ENCODE measurements at regions of chr22 and their contacts with region 1.

Region 1: DNA sequence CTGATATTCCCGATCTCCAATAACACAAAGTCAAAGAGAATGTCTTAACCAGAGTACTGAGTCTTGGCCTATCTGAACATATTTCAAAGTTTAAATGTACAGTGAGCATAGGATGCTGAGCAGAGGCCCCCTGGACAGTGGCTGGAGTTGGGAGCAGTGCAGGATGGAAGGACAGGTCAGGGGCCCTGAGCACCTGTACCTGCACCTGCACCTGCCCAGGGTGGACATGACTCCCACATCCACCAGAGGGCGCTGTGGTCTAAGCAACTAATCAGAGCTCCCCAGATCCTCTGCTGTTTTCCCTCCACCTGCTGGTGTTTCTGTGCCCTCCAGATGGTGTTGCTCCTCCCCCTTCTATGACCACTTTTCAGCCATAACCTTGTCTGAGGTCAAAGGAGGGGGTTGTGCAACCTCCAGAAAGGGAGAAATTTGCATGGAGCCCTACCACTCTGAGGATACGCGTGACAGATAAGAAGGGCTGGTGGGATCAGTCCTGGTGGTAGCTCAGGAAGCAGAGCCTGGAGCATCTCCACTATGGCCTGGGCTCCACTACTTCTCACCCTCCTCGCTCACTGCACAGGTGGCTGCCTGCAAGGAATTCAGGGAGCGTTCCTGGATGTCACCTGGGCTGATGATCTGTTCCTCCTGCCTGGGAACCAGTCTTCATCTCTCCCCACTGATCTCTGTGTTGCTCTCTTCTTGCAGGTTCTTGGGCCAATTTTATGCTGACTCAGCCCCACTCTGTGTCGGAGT is 49.1 kb upstream of the VPREB1 start:
- DNase-seq: peak; percentile 91
- ATAC-seq: peak; percentile 98
- H3K4me3 Mint-ChIP-seq: no peak overlapping the region
- H3K27ac Mint-ChIP-seq: no peak overlapping the region
- H3K4me1 Mint-ChIP-seq: no peaks in the 10 kb centered on the region
- H3K27me3 Mint-ChIP-seq: peaks cover 7% of the 10 kb centered on the region
- CTCF ChIP-seq: peak; percentile 97

Region 2: DNA sequence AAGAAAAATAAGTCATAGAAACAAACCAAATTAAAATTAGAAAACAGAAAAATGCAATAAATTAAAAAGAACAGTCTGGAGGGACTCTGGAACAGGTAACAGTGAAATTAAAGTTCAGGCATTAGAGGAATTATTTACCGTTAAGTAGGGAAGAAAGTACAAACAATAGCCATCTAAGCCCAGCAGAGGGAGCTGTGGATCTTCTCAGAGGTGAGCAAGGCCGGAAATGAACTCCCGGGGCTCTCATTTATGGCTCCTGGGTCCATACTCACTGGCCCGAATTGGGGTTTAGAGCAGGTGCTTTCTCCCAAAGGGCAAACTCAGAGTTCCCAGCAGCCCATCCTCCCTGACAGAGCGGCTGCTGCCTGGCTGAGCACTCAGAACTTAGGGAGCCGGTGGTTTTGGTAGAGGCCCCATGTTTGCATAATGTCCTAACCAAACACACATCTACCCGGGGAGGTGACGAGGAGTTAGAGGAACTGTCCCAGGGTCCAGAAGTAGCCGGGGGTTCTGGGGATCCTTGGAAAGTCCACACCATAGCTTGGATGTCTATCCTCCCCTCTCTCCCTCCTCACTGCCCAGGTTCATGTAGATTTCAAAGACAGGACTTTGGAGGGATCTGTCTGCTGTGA is 38.6 kb before region 1 on chr22:
- CTCF ChIA-PET with region 1: interaction called, 16 read pairs
- POLR2A ChIA-PET with region 1: no interaction called
- intact Hi-C with region 1: no loop called
- DNase-seq: peak; percentile 84
- ATAC-seq: peak; percentile 99
- H3K4me3 Mint-ChIP-seq: no peak overlapping the region
- H3K27ac Mint-ChIP-seq: peak overlapping the region; percentile 53
- H3K4me1 Mint-ChIP-seq: no peaks in the 10 kb centered on the region
- H3K27me3 Mint-ChIP-seq: peaks cover 5% of the 10 kb centered on the region
- CTCF ChIP-seq: peak; percentile 82

Region 3: GRCh38 chr22:22181341-22181850 is 14.0 kb before region 1 on chr22:
- CTCF ChIA-PET with region 1: interaction called, 52 read pairs
- POLR2A ChIA-PET with region 1: no interaction called
- intact Hi-C with region 1: no loop called
- DNase-seq: no peak
- ATAC-seq: no peak
- H3K4me3 Mint-ChIP-seq: no peak overlapping the region
- H3K27ac Mint-ChIP-seq: no peak overlapping the region
- H3K4me1 Mint-ChIP-seq: no peaks in the 10 kb centered on the region
- H3K27me3 Mint-ChIP-seq: peaks cover 18% of the 10 kb centered on the region
- CTCF ChIP-seq: no peak

Region 4: DNA sequence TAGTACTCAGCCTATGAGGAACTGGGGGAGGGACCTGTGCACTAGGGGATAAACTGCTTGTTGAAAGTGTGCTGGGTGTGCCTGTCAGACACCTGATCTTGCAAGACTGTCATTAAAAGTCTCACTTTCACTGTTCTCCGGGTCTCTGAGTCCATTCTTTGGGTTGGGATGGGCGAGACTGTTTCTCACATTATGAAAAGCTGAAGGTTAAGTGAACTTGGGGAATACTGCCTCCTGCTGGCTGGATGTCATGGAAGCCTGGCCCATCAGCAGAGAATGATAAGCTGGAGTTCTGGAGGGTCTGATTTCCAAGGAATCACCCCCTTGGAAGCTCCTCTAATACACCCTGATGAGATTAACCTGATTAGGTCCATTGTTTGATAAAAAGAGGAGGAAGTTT is 40.1 kb after region 1 on chr22:
- CTCF ChIA-PET with region 1: interaction called, 227 read pairs
- POLR2A ChIA-PET with region 1: no interaction called
- intact Hi-C with region 1: no loop called
- DNase-seq: peak; percentile 81
- ATAC-seq: peak; percentile 60
- H3K4me3 Mint-ChIP-seq: no peak overlapping the region
- H3K27ac Mint-ChIP-seq: no peak overlapping the region
- H3K4me1 Mint-ChIP-seq: peaks cover 3% of the 10 kb centered on the region
- H3K27me3 Mint-ChIP-seq: no peaks in the 10 kb centered on the region
- CTCF ChIP-seq: peak; percentile 77

Region 5: GRCh38 chr22:22397277-22397870 is 201.9 kb after region 1 on chr22:
- CTCF ChIA-PET with region 1: no interaction called
- POLR2A ChIA-PET with region 1: no interaction called
- intact Hi-C with region 1: no loop called
- DNase-seq: no peak
- ATAC-seq: no peak
- H3K4me3 Mint-ChIP-seq: no peak overlapping the region
- H3K27ac Mint-ChIP-seq: no peak overlapping the region
- H3K4me1 Mint-ChIP-seq: no peaks in the 10 kb centered on the region
- H3K27me3 Mint-ChIP-seq: peaks cover 3% of the 10 kb centered on the region
- CTCF ChIP-seq: no peak

Region 6: DNA sequence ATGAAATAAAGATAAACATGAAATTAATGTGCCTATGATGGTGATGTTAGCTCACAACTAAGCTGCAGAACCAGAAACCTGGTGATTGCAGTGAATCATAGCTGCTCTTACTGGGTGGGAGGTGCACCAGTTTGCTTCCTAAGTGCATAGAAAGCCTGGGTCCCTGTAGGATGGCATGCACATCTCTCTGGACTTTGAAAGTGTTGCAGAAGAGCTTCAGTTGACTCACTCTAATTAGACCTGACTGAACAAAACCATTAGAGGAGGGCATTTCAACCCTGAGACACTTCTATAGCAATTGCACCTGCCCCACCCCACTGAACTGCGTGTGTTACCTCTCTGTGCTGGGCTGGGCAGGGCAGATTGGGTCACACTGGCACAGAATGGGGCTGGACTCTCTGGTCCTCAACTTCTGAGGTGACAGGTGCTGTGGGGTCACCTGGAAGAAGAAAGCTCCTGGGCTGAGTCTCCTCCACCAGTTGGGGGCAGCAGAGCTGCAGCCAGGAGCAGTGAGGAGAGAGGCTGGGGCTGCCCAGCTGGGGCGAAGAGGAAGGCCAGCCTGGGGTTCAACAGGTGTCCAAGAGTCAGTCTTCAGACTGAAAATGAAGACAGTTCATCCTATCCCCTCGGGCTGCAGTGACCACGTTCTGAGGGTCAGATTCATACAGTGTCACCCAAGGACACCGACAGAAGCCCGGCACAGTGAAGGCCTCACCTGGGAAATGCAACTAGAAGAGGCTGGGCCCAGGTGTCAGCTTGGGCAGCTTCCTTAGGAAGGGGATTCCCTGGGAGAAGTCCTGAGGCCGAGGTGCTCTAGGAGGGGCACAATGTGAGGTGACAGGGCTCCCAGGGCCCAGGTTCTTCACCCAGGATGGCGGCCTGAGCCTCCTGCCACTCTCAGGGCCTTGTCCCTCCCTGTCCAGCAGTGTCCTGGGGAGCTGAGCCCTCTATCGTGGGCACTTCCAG is 507.1 kb after region 1 on chr22:
- CTCF ChIA-PET with region 1: no interaction called
- POLR2A ChIA-PET with region 1: no interaction called
- intact Hi-C with region 1: no loop called
- DNase-seq: peak; percentile 21
- ATAC-seq: no peak
- H3K4me3 Mint-ChIP-seq: no peak overlapping the region
- H3K27ac Mint-ChIP-seq: no peak overlapping the region
- H3K4me1 Mint-ChIP-seq: no peaks in the 10 kb centered on the region
- H3K27me3 Mint-ChIP-seq: no peaks in the 10 kb centered on the region
- CTCF ChIP-seq: peak; percentile 48